Mammary epithelial cell (primary cell): ENCODE measurements at regions of chr6 and their contacts with region 1.

Region 1: GRCh38 chr6:117602151-117602898 is at the start of gene GOPC:
- DNase-seq: peak; percentile 98
- H3K4me3 ChIP-seq: peak within 1 kb of the TSS; percentile 76 to 87 (median 78)
- H3K27ac ChIP-seq: peak within 1 kb of the TSS; percentile 76
- H3K4me1 ChIP-seq: peaks cover 9% of the 10 kb centered on the region
- H3K27me3 ChIP-seq: no peaks in the 10 kb centered on the region
- CTCF ChIP-seq: peak in 1 of 2 donors; percentile 15
- total RNA-seq, gene GOPC: 43.2 to 72.5 TPM

Region 2: GRCh38 chr6:117346142-117346930 is 256.0 kb before region 1 on chr6:
- CTCF ChIA-PET with region 1: no interaction called
- dilution Hi-C with region 1: no loop called
- in situ Hi-C with region 1: loop called (anchors 5 to 10 kb)
- intact Hi-C with region 1: loop called (anchors 1 kb)
- DNase-seq: peak; percentile 9
- H3K4me3 ChIP-seq: no peak overlapping the region
- H3K27ac ChIP-seq: no peak overlapping the region
- H3K4me1 ChIP-seq: no peaks in the 10 kb centered on the region
- H3K27me3 ChIP-seq: no peaks in the 10 kb centered on the region
- CTCF ChIP-seq: peak; percentile 42 to 45

Region 3: DNA sequence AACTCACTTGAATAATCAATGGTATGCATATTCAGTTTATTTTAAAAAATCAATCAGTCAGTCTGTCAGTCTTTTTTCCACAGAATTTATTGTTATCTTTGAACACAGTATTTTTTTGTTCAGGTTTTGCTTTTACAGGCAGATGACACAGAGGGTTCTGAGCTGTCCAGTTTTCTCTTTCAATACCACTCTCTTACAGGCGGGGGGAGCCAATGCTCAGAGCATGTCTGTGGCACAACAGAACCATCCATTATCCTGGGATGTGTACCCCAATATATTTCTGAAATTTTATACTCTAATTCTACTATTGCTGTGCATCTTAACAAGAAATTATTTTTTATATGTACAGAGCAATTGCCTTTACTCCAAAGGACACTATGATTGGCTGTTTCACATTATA is 197.8 kb before region 1 on chr6:
- CTCF ChIA-PET with region 1: no interaction called
- dilution Hi-C with region 1: no loop called
- in situ Hi-C with region 1: no loop called
- intact Hi-C with region 1: loop called (anchors 2 kb)
- DNase-seq: peak; percentile 26
- H3K4me3 ChIP-seq: no peak overlapping the region
- H3K27ac ChIP-seq: no peak overlapping the region
- H3K4me1 ChIP-seq: no peaks in the 10 kb centered on the region
- H3K27me3 ChIP-seq: no peaks in the 10 kb centered on the region
- CTCF ChIP-seq: peak; percentile 29 to 54

Region 4: DNA sequence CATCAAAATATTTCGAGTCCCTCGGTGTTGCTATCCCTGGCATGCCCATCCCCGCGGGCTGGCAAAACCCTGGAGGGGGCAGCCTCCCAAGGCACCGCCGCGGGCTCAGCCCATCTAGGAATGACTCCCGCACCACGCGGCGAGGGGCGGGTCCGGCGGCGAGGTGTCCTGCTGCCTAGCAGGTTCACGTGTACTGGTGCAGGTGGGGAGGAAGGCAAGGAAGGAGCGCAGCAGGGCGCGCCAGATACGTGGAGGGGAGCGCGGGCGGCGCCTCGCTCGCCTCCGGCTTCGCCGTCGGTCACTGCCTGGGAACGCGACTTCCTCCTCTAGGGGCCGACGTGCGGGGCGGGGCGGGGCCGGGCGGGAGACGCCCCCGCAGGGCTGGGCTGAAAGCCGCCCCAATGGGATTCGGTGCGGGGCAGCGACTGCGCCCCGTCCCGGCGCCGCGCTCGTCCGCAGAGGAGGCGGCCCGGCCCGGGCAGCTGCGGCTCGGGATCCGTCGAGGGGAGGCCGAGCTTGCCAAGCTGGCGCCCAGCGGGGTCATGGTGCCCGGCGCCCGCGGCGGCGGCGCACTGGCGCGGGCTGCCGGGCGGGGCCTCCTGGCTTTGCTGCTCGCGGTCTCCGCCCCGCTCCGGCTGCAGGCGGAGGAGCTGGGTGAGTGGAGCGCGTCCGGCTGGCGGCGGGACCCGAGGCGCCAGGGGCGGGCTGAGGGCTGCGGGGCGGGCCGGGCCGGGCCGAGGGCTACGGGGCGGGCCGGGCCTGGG is 119.9 kb before region 1 on chr6 and contains the start of gene DCBLD1:
- CTCF ChIA-PET with region 1: no interaction called
- dilution Hi-C with region 1: no loop called
- in situ Hi-C with region 1: no loop called
- intact Hi-C with region 1: loop called (anchors 2 kb)
- DNase-seq: peak; percentile 86
- H3K4me3 ChIP-seq: peak within 1 kb of the TSS; percentile 81 to 91 (median 83)
- H3K27ac ChIP-seq: peak within 1 kb of the TSS; percentile 79
- H3K4me1 ChIP-seq: peaks cover 27% of the 10 kb centered on the region
- H3K27me3 ChIP-seq: no peaks in the 10 kb centered on the region
- CTCF ChIP-seq: no peak
- total RNA-seq, gene DCBLD1: 34.6 to 84.0 TPM

Region 5: GRCh38 chr6:117829594-117830319 is 227.4 kb after region 1 on chr6:
- CTCF ChIA-PET with region 1: no interaction called
- dilution Hi-C with region 1: no loop called
- in situ Hi-C with region 1: no loop called
- intact Hi-C with region 1: loop called (anchors 5 kb)
- DNase-seq: peak; percentile 33
- H3K4me3 ChIP-seq: peak overlapping the region; percentile 42 to 55 (median 48)
- H3K27ac ChIP-seq: no peak overlapping the region
- H3K4me1 ChIP-seq: no peaks in the 10 kb centered on the region
- H3K27me3 ChIP-seq: no peaks in the 10 kb centered on the region
- CTCF ChIP-seq: peak; percentile 27 to 69